ENCODE measurements at regions of chr6 and their contacts with region 1.

Region 1: GRCh38 chr6:2554651-2555260 is 196.0 kb downstream of the MYLK4 start:
- DNase-seq: peak in 1 of 2 experiments; percentile 67
- H3K4me3 ChIP-seq: no peak overlapping the region
- H3K27ac ChIP-seq: peak overlapping the region; percentile 18; the same call in 1 of the 2 replicates
- H3K4me1 ChIP-seq: peaks cover 11% of the 10 kb centered on the region
- H3K27me3 ChIP-seq: no peaks in the 10 kb centered on the region
- CTCF ChIP-seq: no peak

Region 2: DNA sequence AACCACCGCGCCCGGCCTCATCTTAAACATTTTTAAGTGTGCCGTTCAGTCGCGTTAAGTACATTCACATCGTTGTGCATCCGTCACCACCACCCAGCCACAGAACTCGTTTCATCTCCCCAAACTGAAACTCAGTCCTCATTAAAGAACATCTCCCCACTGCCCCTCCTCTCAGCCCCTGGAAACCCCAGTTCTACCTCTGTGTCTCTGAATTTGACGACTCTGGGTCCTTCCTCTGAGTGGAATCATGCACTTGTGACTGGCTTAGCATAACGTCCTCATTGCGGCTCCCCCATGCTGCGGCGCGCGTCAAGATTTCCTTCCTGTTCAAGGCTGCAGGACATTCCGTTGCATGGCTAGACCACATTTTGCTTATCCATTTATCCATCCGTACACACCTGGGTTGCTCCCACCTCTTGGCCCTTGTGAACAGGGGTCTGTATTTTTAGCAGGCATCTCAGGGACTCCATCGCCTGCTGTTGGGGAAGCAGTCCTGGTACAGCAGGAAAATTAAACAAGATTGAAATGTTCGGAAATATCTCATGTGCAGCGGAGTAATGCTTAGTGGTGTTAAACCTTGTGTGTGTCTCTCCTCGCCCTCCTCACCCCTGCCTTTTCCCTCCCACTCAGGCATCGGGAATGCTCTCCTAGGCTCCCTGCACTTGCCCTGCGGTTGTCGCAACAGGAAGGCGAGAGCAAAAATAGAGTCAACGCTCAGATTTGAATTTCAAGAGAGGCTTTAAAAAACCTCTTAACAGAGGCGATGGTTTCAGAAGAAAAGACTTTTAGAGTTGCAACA is 1068.9 kb after region 1 on chr6:
- CTCF ChIA-PET with region 1: interaction called, 19 read pairs
- POLR2A ChIA-PET with region 1: no interaction called
- intact Hi-C with region 1: no loop called
- DNase-seq: no peak
- H3K4me3 ChIP-seq: no peak overlapping the region
- H3K27ac ChIP-seq: no peak overlapping the region
- H3K4me1 ChIP-seq: no peaks in the 10 kb centered on the region
- H3K27me3 ChIP-seq: no peaks in the 10 kb centered on the region
- CTCF ChIP-seq: no peak

Region 3: GRCh38 chr6:4522453-4522852 is 1967.7 kb after region 1 on chr6:
- CTCF ChIA-PET with region 1: no interaction called
- POLR2A ChIA-PET with region 1: no interaction called
- intact Hi-C with region 1: no loop called
- DNase-seq: no peak
- H3K4me3 ChIP-seq: no peak overlapping the region
- H3K27ac ChIP-seq: no peak overlapping the region
- H3K4me1 ChIP-seq: no peaks in the 10 kb centered on the region
- H3K27me3 ChIP-seq: no peaks in the 10 kb centered on the region
- CTCF ChIP-seq: no peak

Measured in PC-9 (cell line).